ENCODE measurements at regions of chr1 and their contacts with region 1.

Region 1: GRCh38 chr1:84772428-84772943 is 82.2 kb upstream of the SSX2IP start:
- DNase-seq: peak; percentile 25 to 88 (median 66)
- ATAC-seq: peak; percentile 73
- H3K4me3 ChIP-seq: no peak overlapping the region
- H3K4me3 Mint-ChIP-seq: no peak overlapping the region
- H3K27ac ChIP-seq: no peak overlapping the region
- H3K27ac Mint-ChIP-seq: no peak overlapping the region
- H3K4me1 ChIP-seq: no peaks in the 10 kb centered on the region
- H3K4me1 Mint-ChIP-seq: peaks cover 3% of the 10 kb centered on the region
- H3K27me3 ChIP-seq: no peaks in the 10 kb centered on the region
- H3K27me3 Mint-ChIP-seq: peaks cover 3% of the 10 kb centered on the region
- CTCF ChIP-seq: peak; percentile 95

Region 2: GRCh38 chr1:83905315-83905907 is 867.1 kb before region 1 on chr1:
- CTCF ChIA-PET with region 1: interaction called, 5 read pairs
- POLR2A ChIA-PET with region 1: no interaction called
- intact Hi-C with region 1: loop called (anchors 2 kb)
- DNase-seq: peak in 3 of 9 experiments; percentile 7 to 50 (median 40)
- ATAC-seq: peak; percentile 46
- H3K4me3 ChIP-seq: no peak overlapping the region
- H3K4me3 Mint-ChIP-seq: no peak overlapping the region
- H3K27ac ChIP-seq: no peak overlapping the region
- H3K27ac Mint-ChIP-seq: no peak overlapping the region
- H3K4me1 ChIP-seq: no peaks in the 10 kb centered on the region
- H3K4me1 Mint-ChIP-seq: no peaks in the 10 kb centered on the region
- H3K27me3 ChIP-seq: no peaks in the 10 kb centered on the region
- H3K27me3 Mint-ChIP-seq: peaks cover 9% of the 10 kb centered on the region
- CTCF ChIP-seq: peak; percentile 79

Region 3: DNA sequence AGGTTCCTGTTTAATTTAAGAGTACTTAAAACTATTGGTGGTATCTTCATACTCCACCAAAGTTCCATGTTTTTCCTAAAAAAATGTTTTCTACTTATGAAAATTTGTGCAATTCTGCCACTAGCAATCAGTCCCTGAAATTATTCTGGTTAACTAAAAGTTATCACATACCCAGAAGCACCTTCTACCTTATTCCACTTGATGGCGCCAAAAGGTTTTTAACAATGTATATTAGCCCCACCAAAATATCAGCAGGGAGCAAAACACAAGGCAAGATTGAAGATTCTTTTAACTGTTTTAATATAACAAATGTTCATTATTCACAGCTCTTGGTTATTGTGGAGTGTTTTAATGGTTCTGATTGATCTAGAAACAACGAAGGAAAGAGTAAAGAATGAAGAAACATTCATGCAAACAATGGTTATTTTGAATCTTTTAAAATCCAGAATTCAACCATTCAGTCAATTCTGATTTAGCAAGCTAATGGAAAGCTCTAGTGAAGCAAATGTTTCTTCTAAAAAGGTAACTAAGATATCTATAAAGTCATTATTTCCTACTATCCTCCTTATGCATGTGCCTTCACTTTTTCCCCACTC is 840.7 kb before region 1 on chr1:
- CTCF ChIA-PET with region 1: interaction called, 6 read pairs
- POLR2A ChIA-PET with region 1: no interaction called
- intact Hi-C with region 1: loop called (anchors 1 to 2 kb)
- DNase-seq: peak in 3 of 9 experiments; percentile 11 to 69 (median 58)
- ATAC-seq: peak; percentile 69
- H3K4me3 ChIP-seq: no peak overlapping the region
- H3K4me3 Mint-ChIP-seq: no peak overlapping the region
- H3K27ac ChIP-seq: no peak overlapping the region
- H3K27ac Mint-ChIP-seq: no peak overlapping the region
- H3K4me1 ChIP-seq: no peaks in the 10 kb centered on the region
- H3K4me1 Mint-ChIP-seq: no peaks in the 10 kb centered on the region
- H3K27me3 ChIP-seq: no peaks in the 10 kb centered on the region
- H3K27me3 Mint-ChIP-seq: peaks cover 7% of the 10 kb centered on the region
- CTCF ChIP-seq: peak; percentile 86

Region 4: DNA sequence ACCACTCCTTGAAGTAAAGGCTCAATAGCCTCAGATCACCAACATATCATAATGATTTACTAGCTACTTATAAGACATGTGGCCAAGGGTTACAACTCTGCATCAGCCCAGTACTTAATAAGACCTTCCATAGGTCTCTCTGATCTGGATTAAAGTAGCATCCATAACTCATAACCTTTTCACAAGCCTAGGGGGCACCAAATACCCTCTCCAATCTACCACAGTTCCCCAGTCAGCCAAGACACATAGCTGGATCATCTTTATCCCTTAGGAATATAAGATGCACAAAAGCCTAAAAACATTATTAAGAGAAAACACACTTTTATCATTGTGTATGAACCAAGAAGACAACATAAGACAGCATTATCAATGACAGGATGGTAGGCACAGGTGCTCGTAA is 104.3 kb before region 1 on chr1:
- CTCF ChIA-PET with region 1: interaction called, 5 read pairs
- POLR2A ChIA-PET with region 1: no interaction called
- intact Hi-C with region 1: loop called (anchors 5 kb)
- DNase-seq: peak in 2 of 9 experiments; percentile 33 to 48
- ATAC-seq: peak; percentile 36
- H3K4me3 ChIP-seq: no peak overlapping the region
- H3K4me3 Mint-ChIP-seq: no peak overlapping the region
- H3K27ac ChIP-seq: no peak overlapping the region
- H3K27ac Mint-ChIP-seq: no peak overlapping the region
- H3K4me1 ChIP-seq: no peaks in the 10 kb centered on the region
- H3K4me1 Mint-ChIP-seq: peaks cover 9% of the 10 kb centered on the region
- H3K27me3 ChIP-seq: no peaks in the 10 kb centered on the region
- H3K27me3 Mint-ChIP-seq: no peaks in the 10 kb centered on the region
- CTCF ChIP-seq: no peak

Region 5: GRCh38 chr1:84753516-84754385 is 18.7 kb before region 1 on chr1:
- CTCF ChIA-PET with region 1: interaction called, 44 read pairs
- POLR2A ChIA-PET with region 1: no interaction called
- intact Hi-C with region 1: no loop called
- DNase-seq: peak; percentile 56 to 86 (median 73)
- ATAC-seq: peak; percentile 93
- H3K4me3 ChIP-seq: no peak overlapping the region
- H3K4me3 Mint-ChIP-seq: no peak overlapping the region
- H3K27ac ChIP-seq: no peak overlapping the region
- H3K27ac Mint-ChIP-seq: no peak overlapping the region
- H3K4me1 ChIP-seq: no peaks in the 10 kb centered on the region
- H3K4me1 Mint-ChIP-seq: no peaks in the 10 kb centered on the region
- H3K27me3 ChIP-seq: no peaks in the 10 kb centered on the region
- H3K27me3 Mint-ChIP-seq: peaks cover 19% of the 10 kb centered on the region
- CTCF ChIP-seq: peak; percentile 94

Region 6: DNA sequence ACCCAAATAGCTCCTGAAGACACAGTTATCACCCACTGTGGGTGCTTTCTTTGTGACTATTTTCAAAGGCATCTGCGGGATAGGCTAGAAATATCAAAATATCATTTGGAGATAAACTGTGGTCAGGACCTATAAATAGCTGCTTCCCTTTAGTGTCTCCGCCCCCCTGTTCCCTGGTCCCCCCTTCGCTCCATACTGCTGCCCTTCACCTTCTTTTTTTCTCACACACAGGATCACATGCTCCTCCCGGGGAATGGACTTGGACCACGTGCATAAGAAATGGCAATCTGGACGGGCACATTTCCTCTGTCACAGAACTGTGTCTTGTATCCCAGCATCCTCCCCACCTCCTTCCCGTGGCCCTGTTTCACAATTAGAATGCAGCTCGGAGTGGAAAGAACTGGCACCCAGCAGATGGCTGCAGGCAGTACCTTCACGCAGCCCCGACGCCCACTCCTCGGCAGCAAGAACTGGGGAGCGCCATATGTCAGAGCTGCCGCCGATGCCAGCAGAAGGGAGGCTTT is 13.5 kb before region 1 on chr1:
- CTCF ChIA-PET with region 1: interaction called, 44 read pairs
- POLR2A ChIA-PET with region 1: no interaction called
- intact Hi-C with region 1: no loop called
- DNase-seq: no peak
- ATAC-seq: no peak
- H3K4me3 ChIP-seq: no peak overlapping the region
- H3K4me3 Mint-ChIP-seq: peak overlapping the region; percentile 1
- H3K27ac ChIP-seq: no peak overlapping the region
- H3K27ac Mint-ChIP-seq: no peak overlapping the region
- H3K4me1 ChIP-seq: no peaks in the 10 kb centered on the region
- H3K4me1 Mint-ChIP-seq: peaks cover 6% of the 10 kb centered on the region
- H3K27me3 ChIP-seq: no peaks in the 10 kb centered on the region
- H3K27me3 Mint-ChIP-seq: peaks cover 5% of the 10 kb centered on the region
- CTCF ChIP-seq: no peak

Region 7: GRCh38 chr1:84936116-84936810 is 163.8 kb after region 1 on chr1:
- CTCF ChIA-PET with region 1: interaction called, 15 read pairs
- POLR2A ChIA-PET with region 1: no interaction called
- intact Hi-C with region 1: loop called (anchors 1 to 2 kb)
- DNase-seq: peak in 7 of 9 experiments; percentile 10 to 79 (median 35)
- ATAC-seq: peak; percentile 73
- H3K4me3 ChIP-seq: no peak overlapping the region
- H3K4me3 Mint-ChIP-seq: no peak overlapping the region
- H3K27ac ChIP-seq: no peak overlapping the region
- H3K27ac Mint-ChIP-seq: no peak overlapping the region
- H3K4me1 ChIP-seq: peaks cover 5% of the 10 kb centered on the region
- H3K4me1 Mint-ChIP-seq: peaks cover 4% of the 10 kb centered on the region
- H3K27me3 ChIP-seq: no peaks in the 10 kb centered on the region
- H3K27me3 Mint-ChIP-seq: no peaks in the 10 kb centered on the region
- CTCF ChIP-seq: peak; percentile 98

Region 8: DNA sequence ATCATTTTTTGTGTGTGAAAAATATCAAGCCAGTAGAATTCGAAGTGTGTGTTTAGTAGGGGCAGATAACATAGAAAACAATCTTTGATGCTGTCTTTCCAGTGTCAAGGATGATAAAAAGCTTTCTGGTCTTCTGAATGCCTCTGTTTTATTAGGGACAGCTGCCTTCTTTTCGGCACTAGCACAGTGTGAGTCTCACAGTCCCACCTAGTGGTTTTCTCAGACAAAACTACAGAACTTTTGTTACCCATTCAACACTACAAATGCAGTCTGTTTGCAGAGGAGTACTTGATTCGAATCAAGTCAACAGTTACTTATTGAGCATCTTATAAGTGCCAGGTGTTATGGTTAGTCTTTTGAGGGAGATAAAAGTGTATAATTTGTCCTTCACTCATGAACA is 306.4 kb after region 1 on chr1:
- CTCF ChIA-PET with region 1: no interaction called
- POLR2A ChIA-PET with region 1: no interaction called
- intact Hi-C with region 1: no loop called
- DNase-seq: no peak
- ATAC-seq: no peak
- H3K4me3 ChIP-seq: no peak overlapping the region
- H3K4me3 Mint-ChIP-seq: no peak overlapping the region
- H3K27ac ChIP-seq: no peak overlapping the region
- H3K27ac Mint-ChIP-seq: no peak overlapping the region
- H3K4me1 ChIP-seq: no peaks in the 10 kb centered on the region
- H3K4me1 Mint-ChIP-seq: no peaks in the 10 kb centered on the region
- H3K27me3 ChIP-seq: no peaks in the 10 kb centered on the region
- H3K27me3 Mint-ChIP-seq: peaks cover 7% of the 10 kb centered on the region
- CTCF ChIP-seq: no peak